ENCODE measurements at regions of chr11 and their contacts with region 1.

Region 1: GRCh38 chr11:47269002-47269828 is 718 bp upstream of the MADD start:
- DNase-seq: peak; percentile 93 to 96
- ATAC-seq: peak; percentile 89 to 90 (median 90)
- H3K4me3 ChIP-seq: peak overlapping the region; percentile 88
- H3K27ac ChIP-seq: peak overlapping the region; percentile 96
- H3K4me1 ChIP-seq: peaks cover 46% of the 10 kb centered on the region
- H3K27me3 ChIP-seq: no peaks in the 10 kb centered on the region
- CTCF ChIP-seq: no peak

Region 2: GRCh38 chr11:46808799-46809431 is 460.3 kb before region 1 on chr11:
- intact Hi-C with region 1: no loop called
- DNase-seq: no peak
- ATAC-seq: peak in 2 of 4 donors; percentile 41 to 57
- H3K4me3 ChIP-seq: no peak overlapping the region
- H3K27ac ChIP-seq: no peak overlapping the region
- H3K4me1 ChIP-seq: no peaks in the 10 kb centered on the region
- H3K27me3 ChIP-seq: no peaks in the 10 kb centered on the region
- CTCF ChIP-seq: peak; percentile 16

Region 3: GRCh38 chr11:46889689-46890475 is 379.3 kb before region 1 on chr11:
- intact Hi-C with region 1: loop called in 1 of 2 experiments (anchors 10 kb)
- DNase-seq: peak; percentile 28 to 65
- ATAC-seq: peak; percentile 80 to 94 (median 91)
- H3K4me3 ChIP-seq: no peak overlapping the region
- H3K27ac ChIP-seq: no peak overlapping the region
- H3K4me1 ChIP-seq: no peaks in the 10 kb centered on the region
- H3K27me3 ChIP-seq: no peaks in the 10 kb centered on the region
- CTCF ChIP-seq: peak; percentile 87

Region 4: DNA sequence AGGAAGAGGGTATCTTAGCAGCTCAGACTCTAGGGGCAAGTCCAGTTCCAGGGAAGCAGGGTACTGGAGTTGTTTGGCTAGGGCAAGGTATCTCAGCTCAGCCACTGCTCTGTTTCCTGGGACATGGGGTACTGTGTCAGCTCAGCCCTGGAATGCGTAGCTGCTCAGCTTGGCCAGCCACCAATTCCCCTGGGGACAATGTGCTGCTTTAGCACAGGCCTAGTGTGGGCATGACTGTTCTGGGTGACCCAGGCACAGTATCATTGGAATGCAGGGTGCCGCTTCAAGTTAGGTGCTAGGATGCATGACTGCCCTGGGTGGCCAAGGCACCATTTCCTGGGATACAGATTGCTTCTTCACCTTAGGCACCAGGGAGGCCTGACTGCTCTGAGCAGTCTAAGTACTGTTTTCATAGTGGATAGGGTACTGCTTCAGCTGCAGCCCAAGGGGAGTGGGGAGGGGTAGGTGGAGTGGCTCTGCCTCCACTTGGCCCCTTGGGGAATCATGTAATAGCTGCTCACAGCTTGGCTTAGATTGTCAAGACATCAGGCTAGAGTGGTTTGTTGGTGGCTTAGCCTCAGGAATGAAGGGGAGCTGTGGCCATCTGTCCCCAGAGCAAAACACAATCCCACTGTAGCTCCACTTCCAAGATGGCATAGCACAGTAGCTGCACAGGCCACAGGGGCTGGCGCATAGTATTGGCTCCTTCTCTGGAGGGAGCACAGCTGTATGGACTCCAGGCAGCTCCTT is 36.7 kb after region 1 on chr11:
- intact Hi-C with region 1: no loop called
- DNase-seq: peak; percentile 40 to 83
- ATAC-seq: peak; percentile 43 to 97 (median 95)
- H3K4me3 ChIP-seq: no peak overlapping the region
- H3K27ac ChIP-seq: peak overlapping the region; percentile 50
- H3K4me1 ChIP-seq: peaks cover 16% of the 10 kb centered on the region
- H3K27me3 ChIP-seq: no peaks in the 10 kb centered on the region
- CTCF ChIP-seq: no peak